WTC11 (cell line): ENCODE measurements at regions of chrX and their contacts with region 1.

Region 1: DNA sequence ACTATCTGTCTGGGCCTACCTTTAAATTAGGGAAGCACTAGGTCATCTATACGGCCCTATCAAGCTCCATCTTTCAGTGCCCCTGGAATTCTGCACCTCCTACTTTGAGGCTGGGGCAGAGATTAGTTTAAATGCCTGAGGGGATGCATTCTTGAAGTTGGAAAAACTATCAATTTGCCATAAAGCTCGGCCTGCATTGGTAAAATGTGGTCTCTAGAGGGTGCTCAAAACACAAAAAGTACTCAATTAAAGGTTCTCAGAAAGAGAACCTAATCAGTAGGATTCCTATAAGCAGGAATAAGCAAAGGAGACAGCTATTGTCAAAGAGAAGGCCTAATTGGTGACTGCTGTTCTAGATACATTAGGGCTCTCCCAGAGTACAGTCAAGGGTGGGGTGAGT is 111.7 kb downstream of the AMER1 start:
- DNase-seq: peak; percentile 12
- ATAC-seq: peak; percentile 83
- H3K4me3 Mint-ChIP-seq: no peak overlapping the region
- H3K27ac Mint-ChIP-seq: no peak overlapping the region
- H3K4me1 Mint-ChIP-seq: peaks cover 6% of the 10 kb centered on the region
- H3K27me3 Mint-ChIP-seq: no peaks in the 10 kb centered on the region; the same call in 1 of the 2 replicates
- CTCF ChIP-seq: 0 out of 2 replicates have a peak, but pooled peaks have one; percentile 18

Region 2: DNA sequence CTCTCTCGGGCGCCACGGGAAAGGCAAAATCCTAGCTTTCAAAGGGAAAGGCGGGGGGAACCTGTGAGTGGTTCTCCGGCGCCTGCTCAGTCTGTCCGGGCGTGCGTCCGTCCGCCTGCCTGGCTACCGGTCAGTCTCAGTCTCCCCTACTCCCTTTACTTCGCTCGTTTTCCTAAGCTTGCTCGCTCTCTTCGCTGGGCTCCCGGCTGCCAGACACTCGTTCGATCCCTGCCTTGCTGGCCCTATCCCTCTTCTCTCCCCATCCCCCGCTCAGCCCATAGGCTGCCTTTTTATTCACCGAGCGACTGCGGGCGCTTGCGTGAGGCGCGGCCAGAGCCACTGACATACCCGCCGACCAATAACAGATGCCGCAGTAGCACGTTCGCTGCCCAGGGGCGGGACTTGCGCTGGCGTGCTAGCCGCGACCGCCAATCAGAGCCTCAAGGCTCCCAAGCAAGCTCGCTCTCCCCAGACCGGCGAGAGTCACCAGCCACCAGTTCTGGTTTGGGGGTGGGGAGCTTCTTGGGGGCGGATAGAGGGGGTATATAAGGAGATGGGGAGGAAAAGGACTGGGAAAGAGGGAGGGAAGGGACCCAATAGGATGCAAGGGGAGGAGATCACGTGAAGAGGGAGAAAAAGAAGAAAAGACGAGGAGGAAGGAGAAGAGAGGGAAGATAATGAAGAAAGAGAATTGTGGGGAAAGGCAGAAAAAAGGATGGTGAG is 338.7 kb before region 1 on chrX:
- CTCF ChIA-PET with region 1: no interaction called
- POLR2A ChIA-PET with region 1: no interaction called
- DNase-seq: peak; percentile 89
- ATAC-seq: peak; percentile 97
- H3K4me3 Mint-ChIP-seq: peak overlapping the region; percentile 94
- H3K27ac Mint-ChIP-seq: peak overlapping the region; percentile 99
- H3K4me1 Mint-ChIP-seq: peaks cover 38% of the 10 kb centered on the region
- H3K27me3 Mint-ChIP-seq: no peaks in the 10 kb centered on the region
- CTCF ChIP-seq: no peak

Region 3: DNA sequence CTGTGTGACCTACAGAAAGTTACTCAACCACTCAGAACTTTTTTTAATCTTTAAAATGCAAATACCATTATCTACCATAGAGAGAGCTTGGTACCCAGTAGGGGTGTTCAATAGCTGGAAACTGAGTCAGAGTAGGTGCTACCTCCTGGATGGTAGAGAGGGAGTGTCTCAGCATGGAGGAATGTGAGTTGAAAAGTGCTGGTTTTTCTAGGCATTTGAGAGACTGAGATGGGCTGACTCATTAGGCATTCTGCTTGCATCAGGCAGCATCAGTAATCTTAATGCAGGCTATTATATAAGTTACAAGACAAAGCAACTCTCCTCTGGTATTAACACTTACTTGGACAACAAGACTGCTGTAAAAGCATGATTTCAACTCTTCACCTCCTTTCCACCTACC is 237.9 kb before region 1 on chrX:
- CTCF ChIA-PET with region 1: no interaction called
- POLR2A ChIA-PET with region 1: no interaction called
- DNase-seq: no peak
- ATAC-seq: no peak
- H3K4me3 Mint-ChIP-seq: no peak overlapping the region
- H3K27ac Mint-ChIP-seq: no peak overlapping the region
- H3K4me1 Mint-ChIP-seq: peaks cover 8% of the 10 kb centered on the region
- H3K27me3 Mint-ChIP-seq: no peaks in the 10 kb centered on the region
- CTCF ChIP-seq: no peak

Region 4: DNA sequence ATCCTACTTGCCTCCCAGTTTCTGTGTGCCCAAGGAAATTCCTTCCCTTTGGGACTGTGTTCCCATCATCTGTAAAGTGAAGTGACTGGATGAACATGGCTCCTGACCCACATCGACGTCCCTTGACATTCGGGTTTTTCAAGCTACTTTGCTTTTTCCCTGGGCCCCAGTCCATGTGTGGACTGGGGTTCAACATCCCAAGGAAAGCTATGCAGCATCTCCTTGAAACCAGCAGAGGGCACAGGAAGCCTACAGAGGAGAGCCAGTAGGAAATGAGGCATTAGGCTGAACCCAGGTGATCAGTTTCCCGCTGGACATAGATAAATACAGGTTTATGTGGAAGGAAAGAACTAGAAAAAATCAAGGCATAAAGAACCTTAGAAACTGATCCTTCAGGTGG is 163.6 kb before region 1 on chrX:
- CTCF ChIA-PET with region 1: interaction called, 11 read pairs
- POLR2A ChIA-PET with region 1: no interaction called
- DNase-seq: peak; percentile 13
- ATAC-seq: peak; percentile 66
- H3K4me3 Mint-ChIP-seq: no peak overlapping the region
- H3K27ac Mint-ChIP-seq: no peak overlapping the region
- H3K4me1 Mint-ChIP-seq: peaks cover 23% of the 10 kb centered on the region
- H3K27me3 Mint-ChIP-seq: no peaks in the 10 kb centered on the region; the same call in 1 of the 2 replicates
- CTCF ChIP-seq: 0 out of 2 replicates have a peak, but pooled peaks have one; percentile 23

Region 5: DNA sequence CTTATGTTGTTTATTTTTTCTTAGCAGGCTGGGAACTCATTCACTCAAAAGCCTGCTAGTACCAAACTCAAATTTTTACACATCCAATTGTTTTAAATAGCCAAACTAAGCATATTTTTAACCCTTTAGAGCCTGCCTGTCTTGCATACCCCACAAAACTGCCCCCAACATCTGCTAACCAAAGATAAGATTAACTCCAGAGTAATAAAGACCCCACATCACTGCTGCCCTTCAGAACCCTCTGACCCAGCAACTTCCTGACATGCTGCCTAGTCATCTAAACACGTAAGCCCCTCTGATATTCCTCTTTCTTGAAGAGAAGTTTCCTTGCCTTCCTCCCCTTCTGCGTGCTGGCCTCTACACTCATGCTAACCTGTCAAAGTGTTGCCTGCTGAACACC is 197.4 kb after region 1 on chrX:
- CTCF ChIA-PET with region 1: no interaction called
- POLR2A ChIA-PET with region 1: no interaction called
- DNase-seq: no peak
- ATAC-seq: no peak
- H3K4me3 Mint-ChIP-seq: no peak overlapping the region
- H3K27ac Mint-ChIP-seq: no peak overlapping the region
- H3K4me1 Mint-ChIP-seq: no peaks in the 10 kb centered on the region
- H3K27me3 Mint-ChIP-seq: no peaks in the 10 kb centered on the region
- CTCF ChIP-seq: no peak